ENCODE measurements at regions of chr13 and their contacts with region 1.

Region 1: GRCh38 chr13:25114220-25114619 is 18.3 kb downstream of the PABPC3 start:
- DNase-seq: peak; percentile 61
- ATAC-seq: peak; percentile 57 to 85

Region 2: DNA sequence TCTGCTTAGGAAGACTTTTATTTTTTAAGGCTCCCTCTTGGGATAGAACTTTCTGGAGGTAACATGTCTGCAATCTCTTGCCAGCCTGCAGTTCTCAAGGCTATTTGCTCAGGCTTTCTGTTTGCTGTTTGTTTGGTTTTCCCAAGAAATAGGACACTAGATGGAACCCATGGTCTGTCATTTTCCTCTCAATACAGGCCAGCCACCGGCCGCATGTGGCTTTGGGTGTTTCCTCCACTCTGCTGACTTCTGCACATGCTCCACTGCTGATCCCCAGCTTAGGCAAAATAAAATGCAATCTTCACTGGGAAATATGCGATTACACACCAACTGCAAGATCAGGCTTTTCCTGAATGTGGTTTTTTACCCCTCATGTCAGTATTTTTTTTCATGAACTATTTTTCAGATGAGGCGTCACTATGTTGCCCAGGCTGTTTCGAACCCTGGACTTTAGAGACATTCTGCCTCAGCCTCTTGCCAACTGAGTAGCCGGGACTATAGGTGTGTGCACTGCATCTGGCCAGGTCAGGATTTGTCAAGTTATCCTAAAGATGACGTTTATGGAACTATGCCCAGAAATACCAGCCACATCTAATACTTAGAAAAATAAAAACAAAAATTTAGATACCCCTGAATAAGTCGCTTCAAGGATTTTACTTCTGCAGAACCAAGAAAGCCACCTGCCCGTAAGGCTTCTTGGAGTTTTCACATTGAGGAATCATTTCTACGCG is 112.6 kb before region 1 on chr13:
- intact Hi-C with region 1: loop called in 1 of 2 experiments (anchors 5 kb)
- DNase-seq: no peak
- ATAC-seq: no peak

Region 3: DNA sequence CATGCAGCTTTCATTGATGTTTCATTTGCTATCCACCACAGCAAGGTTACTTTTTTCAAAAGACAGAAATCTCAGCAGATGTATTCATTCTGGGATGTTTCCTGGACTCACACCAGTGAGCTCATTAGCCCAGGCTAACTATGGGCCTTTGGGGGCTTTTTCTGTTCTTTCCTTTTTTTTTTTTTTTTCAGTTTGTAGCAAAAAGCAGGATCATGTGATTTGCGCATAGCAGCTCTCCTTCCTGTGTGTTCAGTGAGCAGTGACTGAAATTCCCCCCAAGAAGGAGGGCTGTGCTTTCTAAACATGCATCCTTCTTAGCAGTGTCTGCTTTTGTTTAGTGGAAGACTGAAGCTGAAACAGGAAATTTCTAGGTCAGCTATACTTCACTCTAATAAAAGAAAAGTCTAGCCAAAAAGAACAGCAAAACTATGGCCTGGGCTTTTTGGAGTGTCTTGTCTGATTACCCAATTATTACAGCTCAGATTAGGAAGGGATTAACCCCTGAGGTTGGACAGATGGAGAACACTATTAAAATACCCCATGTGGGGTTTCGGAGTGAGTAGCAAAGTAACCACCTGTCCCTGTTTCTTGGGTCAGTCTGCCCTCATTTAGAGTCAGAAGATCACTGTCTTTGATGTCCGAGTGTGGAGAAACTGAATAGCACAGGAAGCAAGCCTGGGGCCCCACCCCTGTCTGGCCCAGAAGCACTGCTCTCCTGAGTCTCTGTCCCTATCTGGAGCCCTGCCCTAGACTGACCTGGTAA is 66.7 kb after region 1 on chr13:
- intact Hi-C with region 1: no loop called
- DNase-seq: no peak
- ATAC-seq: no peak

Measured in left cardiac atrium (tissue), 4 donors.